PC-3 (cell line): ENCODE measurements at regions of chr9 and their contacts with region 1.

Region 1: GRCh38 chr9:32426278-32426939 is 42.0 kb downstream of the ACO1 start:
- DNase-seq: peak; percentile 64
- ATAC-seq: peak; percentile 27
- H3K4me3 ChIP-seq: no peak overlapping the region
- H3K27ac ChIP-seq: peak overlapping the region; percentile 27
- H3K4me1 ChIP-seq: peaks cover 64% of the 10 kb centered on the region
- H3K27me3 ChIP-seq: no peaks in the 10 kb centered on the region
- CTCF ChIP-seq: no peak

Region 2: GRCh38 chr9:32395490-32396216 is 30.8 kb before region 1 on chr9:
- CTCF ChIA-PET with region 1: no interaction called
- POLR2A ChIA-PET with region 1: no interaction called
- intact Hi-C with region 1: loop called (anchors 2 kb)
- DNase-seq: peak; percentile 56
- ATAC-seq: peak; percentile 75
- H3K4me3 ChIP-seq: no peak overlapping the region
- H3K27ac ChIP-seq: peak overlapping the region; percentile 54
- H3K4me1 ChIP-seq: peaks cover 24% of the 10 kb centered on the region
- H3K27me3 ChIP-seq: no peaks in the 10 kb centered on the region
- CTCF ChIP-seq: 0 out of 2 replicates have a peak, but pooled peaks have one; percentile 21